Activated CD4-positive, alpha-beta T cell treated with anti-CD3 and anti-CD28 coated beads, Interleukin-2, amount 10 ng/mL, durations not matched to agents 7 days and 5 days (primary cell): ENCODE measurements at regions of chr20 and their contacts with region 1.

Region 1: DNA sequence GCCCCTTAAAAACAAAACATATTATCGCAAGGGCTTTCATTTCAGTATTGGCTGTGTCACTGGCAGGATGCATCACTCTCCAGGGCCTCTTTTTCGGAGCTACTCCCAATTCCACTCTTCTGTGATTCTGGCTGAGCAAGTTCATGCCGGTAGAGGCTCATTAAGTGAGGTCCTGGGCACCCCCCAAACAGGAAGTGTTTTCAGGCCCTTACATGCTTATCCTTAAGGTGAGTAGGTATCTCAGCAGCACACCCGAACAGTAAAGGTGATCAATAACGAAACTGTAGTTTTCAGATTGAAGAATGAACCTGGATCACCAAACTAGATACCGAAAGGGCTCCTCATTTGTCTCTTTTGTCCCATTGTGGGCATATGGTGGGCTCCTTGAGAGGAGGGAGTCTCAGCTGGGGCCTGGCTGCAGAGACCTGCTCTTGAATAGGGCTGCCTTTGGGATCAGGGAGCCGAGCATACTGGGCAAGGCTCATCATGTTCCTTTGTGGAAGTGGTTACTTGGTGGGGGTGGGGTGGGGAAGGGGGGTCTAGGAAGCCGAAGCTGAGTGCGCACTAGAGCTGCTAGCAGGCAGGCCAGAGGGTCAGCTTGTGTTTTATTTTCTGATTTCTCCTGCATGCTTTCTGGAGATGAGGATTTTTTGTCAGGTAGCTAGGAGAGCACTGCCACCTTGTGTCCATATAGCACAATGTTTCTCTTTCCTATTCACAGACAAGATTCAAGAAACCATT is 65.2 kb downstream of the CDS2 start:
- DNase-seq: peak; percentile 57
- H3K4me3 Mint-ChIP-seq: no peak overlapping the region
- H3K27ac Mint-ChIP-seq: peak overlapping the region; percentile 77
- H3K4me1 Mint-ChIP-seq: peaks cover 20% of the 10 kb centered on the region
- H3K27me3 Mint-ChIP-seq: no peaks in the 10 kb centered on the region

Region 2: GRCh38 chr20:5100684-5101347 is 91.2 kb before region 1 on chr20:
- CTCF ChIA-PET with region 1: interaction called, 14 read pairs
- POLR2A ChIA-PET with region 1: no interaction called
- DNase-seq: peak; percentile 78
- H3K4me3 Mint-ChIP-seq: no peak overlapping the region
- H3K27ac Mint-ChIP-seq: peak overlapping the region; percentile 59
- H3K4me1 Mint-ChIP-seq: peaks cover 18% of the 10 kb centered on the region
- H3K27me3 Mint-ChIP-seq: no peaks in the 10 kb centered on the region

Region 3: DNA sequence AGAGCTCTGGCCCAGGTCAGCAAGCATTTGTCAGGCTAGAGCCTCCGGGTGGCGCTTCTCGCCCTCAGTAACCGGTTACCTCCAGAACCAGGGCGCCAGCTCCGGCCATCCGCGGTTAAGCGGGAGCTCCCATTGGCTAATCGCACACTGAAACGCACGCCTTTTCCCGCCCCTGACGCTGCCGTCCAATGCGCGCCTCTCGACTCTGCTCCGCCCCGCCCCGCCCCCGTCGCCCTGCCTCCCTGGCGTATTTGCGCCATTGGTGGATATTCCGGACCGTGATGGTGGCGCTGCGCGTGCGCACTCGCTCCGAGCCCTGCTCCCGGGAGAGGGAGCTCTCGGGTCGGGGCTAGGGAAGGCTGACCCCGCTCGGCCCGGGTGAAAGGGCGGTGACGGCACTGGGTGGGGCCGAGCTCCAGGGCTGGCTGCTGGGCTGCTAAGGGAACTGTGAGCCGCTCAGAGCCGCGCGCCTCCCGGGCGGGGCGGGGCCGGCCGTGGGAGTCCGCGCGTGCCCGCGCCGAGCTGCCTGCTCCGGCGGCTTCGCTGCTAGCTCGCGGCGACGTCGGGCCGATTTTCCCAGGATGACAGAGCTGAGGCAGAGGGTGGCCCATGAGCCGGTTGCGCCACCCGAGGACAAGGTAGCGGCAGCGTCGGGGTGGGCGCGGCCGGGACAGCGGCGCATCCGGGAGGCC is 65.3 kb before region 1 on chr20 and contains the start of gene CDS2:
- CTCF ChIA-PET with region 1: interaction called, 36 read pairs
- POLR2A ChIA-PET with region 1: no interaction called
- DNase-seq: peak; percentile 100
- H3K4me3 Mint-ChIP-seq: peak within 1 kb of the TSS; percentile 97
- H3K27ac Mint-ChIP-seq: peak within 1 kb of the TSS; percentile 97
- H3K4me1 Mint-ChIP-seq: peaks cover 59% of the 10 kb centered on the region
- H3K27me3 Mint-ChIP-seq: no peaks in the 10 kb centered on the region
- total RNA-seq, gene CDS2: 54.5 to 58.4 TPM

Region 4: DNA sequence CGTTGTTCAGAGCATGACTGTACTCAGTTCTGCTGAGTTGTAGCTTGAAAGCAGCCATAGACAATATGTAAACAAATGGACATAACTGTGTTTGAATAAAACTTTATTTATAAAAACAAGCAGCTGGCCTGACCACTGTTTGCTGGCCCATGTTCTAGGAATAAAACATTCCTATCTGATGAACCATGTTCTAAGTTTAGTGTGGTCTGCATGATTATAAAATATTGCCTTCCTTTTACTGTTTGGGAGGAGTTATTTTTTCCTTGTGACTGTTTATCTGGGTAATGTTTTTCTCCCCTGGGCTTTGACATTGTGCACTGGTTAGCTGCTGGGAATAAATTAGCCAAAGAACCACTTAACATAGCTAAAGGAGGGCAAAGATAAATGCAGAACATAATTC is 10.0 kb before region 1 on chr20:
- CTCF ChIA-PET with region 1: interaction called, 10 read pairs
- POLR2A ChIA-PET with region 1: no interaction called
- DNase-seq: no peak
- H3K4me3 Mint-ChIP-seq: no peak overlapping the region
- H3K27ac Mint-ChIP-seq: no peak overlapping the region
- H3K4me1 Mint-ChIP-seq: peaks cover 2% of the 10 kb centered on the region
- H3K27me3 Mint-ChIP-seq: no peaks in the 10 kb centered on the region